GM10248 (cell line): ENCODE measurements at regions of chr5 and their contacts with region 1.

Region 1: GRCh38 chr5:160230686-160231527 is 1.6 kb downstream of the FABP6 start:
- DNase-seq: peak; percentile 47
- CTCF ChIP-seq: no peak

Region 2: GRCh38 chr5:160199410-160199911 is 31.4 kb before region 1 on chr5:
- CTCF ChIA-PET with region 1: interaction called, 11 read pairs
- POLR2A ChIA-PET with region 1: no interaction called
- DNase-seq: peak; percentile 91
- CTCF ChIP-seq: peak; percentile 90

Region 3: GRCh38 chr5:160245506-160246086 is 14.7 kb after region 1 on chr5:
- CTCF ChIA-PET with region 1: interaction called, 19 read pairs
- POLR2A ChIA-PET with region 1: no interaction called
- DNase-seq: no peak
- CTCF ChIP-seq: no peak

Region 4: DNA sequence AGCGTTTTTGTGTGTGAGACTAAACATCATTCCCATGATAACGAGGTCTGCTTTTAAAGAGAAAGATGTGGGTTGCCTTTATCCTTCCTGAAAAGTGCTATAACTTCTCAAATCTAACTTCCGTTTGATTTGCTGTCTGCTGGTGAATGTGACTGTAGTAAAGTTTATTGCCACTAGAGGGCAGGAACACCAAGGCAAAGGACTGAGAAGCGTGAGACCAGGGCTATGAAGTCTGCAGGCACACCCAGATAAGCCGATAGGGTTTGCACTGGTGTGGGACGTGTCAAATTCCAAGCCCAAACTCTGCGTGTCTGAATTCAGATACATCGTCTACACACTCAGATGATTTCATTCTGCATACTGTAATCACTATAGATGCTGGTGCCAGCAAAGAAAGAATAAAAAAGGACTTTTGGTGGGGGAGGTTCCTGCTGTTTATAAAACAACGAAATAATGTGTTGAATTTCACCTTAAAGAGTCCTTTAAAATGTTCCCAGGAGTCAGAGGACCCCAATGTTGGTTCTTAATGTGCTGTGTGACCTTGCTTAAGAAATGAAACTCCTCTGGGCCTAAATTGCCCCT is 278.0 kb after region 1 on chr5:
- CTCF ChIA-PET with region 1: no interaction called
- POLR2A ChIA-PET with region 1: no interaction called
- DNase-seq: peak; percentile 77
- CTCF ChIP-seq: peak; percentile 89